GM13977 (cell line): ENCODE measurements at regions of chr16 and their contacts with region 1.

Region 1: GRCh38 chr16:21708533-21709115 is 44.9 kb downstream of the OTOA start:
- DNase-seq: peak; percentile 80
- CTCF ChIP-seq: peak; percentile 81

Region 2: DNA sequence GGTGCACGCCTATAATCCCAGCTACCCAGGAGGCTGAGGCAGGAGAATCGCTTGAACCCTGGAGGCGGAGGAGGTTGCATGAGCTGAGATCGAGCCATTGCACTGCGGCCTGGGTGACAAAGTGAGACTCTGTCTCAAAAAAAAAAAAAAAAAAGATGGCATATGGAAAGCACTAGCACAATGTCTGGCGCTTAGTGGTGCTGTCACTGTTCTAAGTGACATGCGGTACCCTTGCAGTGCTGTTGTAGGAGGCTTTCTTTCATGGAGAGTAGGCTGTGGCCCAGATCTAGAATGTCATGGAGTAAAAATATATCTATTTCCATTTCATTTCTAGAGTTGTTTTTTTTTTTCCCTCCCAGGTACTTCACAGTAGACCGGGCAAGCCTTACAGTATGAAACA is 123.8 kb before region 1 on chr16:
- in situ Hi-C with region 1: loop called (anchors 5 kb)
- DNase-seq: no peak
- CTCF ChIP-seq: no peak

Region 3: GRCh38 chr16:21656795-21657768 is 51.5 kb before region 1 on chr16:
- in situ Hi-C with region 1: loop called (anchors 10 kb)
- DNase-seq: peak; percentile 73
- CTCF ChIP-seq: peak; percentile 71

Region 4: GRCh38 chr16:22055878-22056277 is 347.3 kb after region 1 on chr16:
- in situ Hi-C with region 1: no loop called
- DNase-seq: no peak
- CTCF ChIP-seq: no peak